Body of pancreas (tissue), 4 donors: ENCODE measurements at regions of chr19 and their contacts with region 1.

Region 1: GRCh38 chr19:56076498-56076897 is 44.6 kb downstream of the ZNF787 start:
- DNase-seq: peak; percentile 65 to 76 (median 68)
- ATAC-seq: peak; percentile 46
- H3K4me3 ChIP-seq: no peak overlapping the region
- H3K27ac ChIP-seq: no peak overlapping the region
- H3K4me1 ChIP-seq: peaks cover 9% of the 10 kb centered on the region
- H3K27me3 ChIP-seq: no peaks in the 10 kb centered on the region
- CTCF ChIP-seq: peak; percentile 55 to 83 (median 81)
- POLR2A ChIP-seq: no peak

Region 2: DNA sequence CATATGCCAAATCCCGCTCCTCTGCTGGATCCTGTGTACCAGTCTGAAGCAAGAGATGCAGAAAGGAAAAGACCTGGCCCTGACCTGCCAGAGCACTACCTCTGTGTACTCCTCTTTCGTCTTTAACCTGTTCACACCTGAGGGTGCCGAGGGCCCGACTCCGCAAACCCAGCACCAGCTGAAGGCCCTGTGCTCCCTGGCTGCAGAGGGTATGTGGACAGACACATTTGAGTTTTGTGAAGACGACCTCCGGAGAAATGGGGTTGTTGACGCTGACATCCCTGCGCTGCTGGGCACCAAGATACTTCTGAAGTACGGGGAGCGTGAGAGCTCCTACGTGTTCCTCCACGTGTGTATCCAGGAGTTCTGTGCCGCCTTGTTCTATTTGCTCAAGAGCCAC is 218.1 kb before region 1 on chr19:
- intact Hi-C with region 1: no loop called
- DNase-seq: no peak
- ATAC-seq: no peak
- H3K4me3 ChIP-seq: no peak overlapping the region
- H3K27ac ChIP-seq: no peak overlapping the region
- H3K4me1 ChIP-seq: no peaks in the 10 kb centered on the region
- H3K27me3 ChIP-seq: no peaks in the 10 kb centered on the region
- CTCF ChIP-seq: no peak
- POLR2A ChIP-seq: no peak

Region 3: GRCh38 chr19:55962186-55962585 is 114.3 kb before region 1 on chr19:
- intact Hi-C with region 1: no loop called
- DNase-seq: no peak
- ATAC-seq: no peak
- H3K4me3 ChIP-seq: no peak overlapping the region
- H3K27ac ChIP-seq: no peak overlapping the region
- H3K4me1 ChIP-seq: no peaks in the 10 kb centered on the region
- H3K27me3 ChIP-seq: no peaks in the 10 kb centered on the region
- CTCF ChIP-seq: no peak
- POLR2A ChIP-seq: no peak

Region 4: GRCh38 chr19:55973982-55974381 is 102.5 kb before region 1 on chr19:
- intact Hi-C with region 1: no loop called
- DNase-seq: no peak
- ATAC-seq: no peak
- H3K4me3 ChIP-seq: no peak overlapping the region
- H3K27ac ChIP-seq: no peak overlapping the region
- H3K4me1 ChIP-seq: no peaks in the 10 kb centered on the region
- H3K27me3 ChIP-seq: no peaks in the 10 kb centered on the region
- CTCF ChIP-seq: no peak
- POLR2A ChIP-seq: no peak

Region 5: DNA sequence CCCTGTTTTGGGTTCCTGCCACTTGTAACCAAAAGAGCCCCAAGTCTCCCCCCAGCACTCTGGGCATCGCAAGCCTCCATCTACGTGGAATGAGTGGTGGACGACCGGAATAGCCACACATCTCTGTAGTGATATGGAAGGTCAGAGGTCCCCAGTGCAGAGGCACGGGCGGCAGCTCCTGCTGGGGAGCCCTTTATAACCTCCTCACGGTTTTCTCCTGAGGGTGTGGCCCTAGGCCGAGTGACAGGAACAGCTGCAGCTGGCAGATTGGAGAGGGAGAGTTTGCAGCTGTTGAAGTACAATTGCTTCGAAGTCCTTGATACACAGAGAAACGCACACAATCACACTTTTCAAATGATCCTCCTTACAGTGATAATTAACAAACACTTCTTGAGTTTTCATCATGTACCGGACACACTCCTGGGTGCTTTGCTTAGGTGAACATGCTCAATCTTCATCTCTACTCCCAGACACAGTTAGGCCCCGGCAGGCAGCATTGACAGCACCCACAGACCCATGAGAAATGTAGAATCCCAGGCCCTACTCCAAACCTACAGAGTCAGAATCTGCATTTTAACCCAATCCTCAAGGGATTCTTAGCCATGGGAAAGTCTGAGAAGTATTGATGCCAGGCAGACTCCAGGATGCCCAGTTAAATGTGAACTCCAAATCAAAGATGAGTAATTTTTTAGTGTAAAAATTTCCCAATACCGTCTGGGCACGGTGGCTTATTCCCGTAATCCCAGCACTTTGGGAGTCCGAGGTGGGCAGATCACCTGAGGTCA is 49.5 kb after region 1 on chr19:
- intact Hi-C with region 1: no loop called
- DNase-seq: peak; percentile 64 to 81 (median 74)
- ATAC-seq: no peak
- H3K4me3 ChIP-seq: no peak overlapping the region
- H3K27ac ChIP-seq: peak overlapping the region; percentile 44 to 72 (median 60)
- H3K4me1 ChIP-seq: peaks cover 26% of the 10 kb centered on the region
- H3K27me3 ChIP-seq: no peaks in the 10 kb centered on the region
- CTCF ChIP-seq: no peak
- POLR2A ChIP-seq: no peak

Region 6: DNA sequence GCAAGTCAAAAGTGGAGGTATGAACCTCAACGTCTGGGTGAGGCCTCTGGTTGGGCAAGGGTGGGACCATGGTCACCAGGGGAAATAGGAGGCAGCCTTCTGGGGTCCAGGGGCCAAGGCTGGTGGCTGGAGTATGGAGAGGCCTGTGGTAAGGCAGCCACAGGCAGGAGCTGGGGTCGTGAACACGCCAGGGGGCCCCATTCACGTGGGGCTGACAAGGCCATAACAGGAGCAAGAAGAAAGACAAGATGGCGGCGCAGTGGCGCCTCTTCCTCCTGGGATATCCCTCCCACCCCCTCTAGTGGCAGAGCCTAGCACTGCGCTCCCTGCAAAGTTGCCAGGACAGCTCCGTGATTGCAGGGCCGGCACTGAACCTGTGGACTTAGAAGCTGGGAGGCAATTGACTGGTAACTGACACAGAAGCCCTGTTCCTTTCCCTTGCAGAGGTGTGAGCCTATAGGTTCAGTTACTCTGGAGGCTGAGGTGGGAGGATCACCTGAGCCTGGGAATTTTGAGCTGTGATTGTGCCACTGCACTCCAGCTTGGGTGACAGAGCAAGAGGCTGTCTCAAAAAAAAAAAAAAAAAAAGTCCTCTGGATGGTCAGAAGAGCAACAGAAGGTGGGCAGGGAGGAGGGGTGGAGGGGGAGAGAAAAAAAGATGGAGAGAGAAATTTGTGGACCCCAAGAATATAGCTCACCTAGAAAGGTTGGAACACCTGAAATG is 176.4 kb after region 1 on chr19:
- intact Hi-C with region 1: loop called (anchors 10 kb)
- DNase-seq: peak; percentile 82 to 86 (median 84)
- ATAC-seq: peak; percentile 82
- H3K4me3 ChIP-seq: no peak overlapping the region
- H3K27ac ChIP-seq: no peak overlapping the region
- H3K4me1 ChIP-seq: no peaks in the 10 kb centered on the region
- H3K27me3 ChIP-seq: no peaks in the 10 kb centered on the region
- CTCF ChIP-seq: peak; percentile 70 to 84 (median 77)
- POLR2A ChIP-seq: no peak